ENCODE measurements at regions of chr1 and their contacts with region 1.

Region 1: GRCh38 chr1:12275369-12275768 is 45.5 kb downstream of the VPS13D start:
- DNase-seq: no peak
- H3K4me3 ChIP-seq: no peak overlapping the region
- CTCF ChIP-seq: peak; percentile 78

Region 2: GRCh38 chr1:12229835-12230548 is 45.4 kb before region 1 on chr1 and contains the start of gene VPS13D:
- CTCF ChIA-PET with region 1: interaction called, 12 read pairs
- POLR2A ChIA-PET with region 1: no interaction called
- DNase-seq: no peak
- H3K4me3 ChIP-seq: peak within 1 kb of the TSS; percentile 81
- CTCF ChIP-seq: peak; percentile 87

Region 3: GRCh38 chr1:12285496-12286143 is 10.3 kb after region 1 on chr1:
- CTCF ChIA-PET with region 1: interaction called, 52 read pairs
- POLR2A ChIA-PET with region 1: no interaction called
- DNase-seq: no peak
- H3K4me3 ChIP-seq: no peak overlapping the region
- CTCF ChIP-seq: no peak

Region 4: GRCh38 chr1:12301518-12302237 is 26.3 kb after region 1 on chr1:
- CTCF ChIA-PET with region 1: interaction called, 13 read pairs
- POLR2A ChIA-PET with region 1: no interaction called
- DNase-seq: no peak
- H3K4me3 ChIP-seq: no peak overlapping the region
- CTCF ChIP-seq: no peak

Region 5: DNA sequence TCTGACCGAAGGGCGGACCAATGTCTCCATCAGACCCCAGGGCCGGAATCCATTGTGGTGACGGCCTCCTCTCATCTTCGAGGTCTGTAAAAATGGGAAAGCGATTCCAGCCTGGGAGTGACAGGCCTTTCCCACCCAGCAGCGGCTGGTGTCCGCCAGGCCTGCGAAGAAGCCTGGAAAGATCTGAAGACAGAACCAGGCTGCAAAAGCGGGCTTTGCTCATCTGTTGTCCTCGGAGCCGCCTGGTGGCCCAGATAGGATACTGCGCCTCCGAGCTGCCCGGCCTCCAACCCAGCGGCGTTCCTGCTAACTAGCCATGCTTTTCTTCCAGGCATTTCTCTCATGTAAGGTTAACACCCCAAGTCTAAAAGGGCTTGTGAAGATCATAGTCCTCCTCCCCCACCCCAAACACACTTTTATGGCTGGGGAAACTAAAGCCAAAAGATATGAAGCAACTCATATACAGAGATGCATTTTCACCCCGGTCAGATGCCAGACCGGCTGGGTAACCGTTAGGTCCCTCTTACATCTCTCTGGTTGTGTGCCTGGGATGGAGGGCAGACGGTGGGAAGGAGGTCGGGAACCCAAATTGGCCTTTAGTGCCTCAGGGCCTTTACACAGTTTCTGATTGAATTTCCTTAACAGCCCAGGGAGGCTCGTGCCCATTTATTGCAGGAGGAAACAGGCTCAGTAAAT is 344.6 kb after region 1 on chr1:
- CTCF ChIA-PET with region 1: interaction called, 37 read pairs
- POLR2A ChIA-PET with region 1: interaction called, 3 read pairs
- DNase-seq: no peak
- H3K4me3 ChIP-seq: peak overlapping the region; percentile 82
- CTCF ChIP-seq: peak; percentile 93